B cell (primary cell): ENCODE measurements at regions of chr19 and their contacts with region 1.

Region 1: GRCh38 chr19:1756705-1757465 is 3.6 kb downstream of the ONECUT3 start:
- DNase-seq: peak; percentile 49
- ATAC-seq: no peak
- H3K4me3 ChIP-seq: no peak overlapping the region
- H3K4me3 Mint-ChIP-seq: peak overlapping the region; percentile 55
- H3K27ac ChIP-seq: no peak overlapping the region
- H3K27ac Mint-ChIP-seq: peak overlapping the region; percentile 67
- H3K4me1 ChIP-seq: peaks cover 48 to 53% of the 10 kb centered on the region in 2 donors
- H3K4me1 Mint-ChIP-seq: peaks cover 19% of the 10 kb centered on the region
- H3K27me3 ChIP-seq: peaks cover 0 to 83% (median 53%) of the 10 kb centered on the region in 4 experiments
- H3K27me3 Mint-ChIP-seq: peaks cover 29% of the 10 kb centered on the region
- CTCF ChIP-seq: no peak

Region 2: GRCh38 chr19:1611353-1611752 is 145.5 kb before region 1 on chr19:
- CTCF ChIA-PET with region 1: no interaction called
- POLR2A ChIA-PET with region 1: interaction called, 13 read pairs
- intact Hi-C with region 1: no loop called
- DNase-seq: no peak
- ATAC-seq: no peak
- H3K4me3 ChIP-seq: no peak overlapping the region
- H3K4me3 Mint-ChIP-seq: no peak overlapping the region
- H3K27ac ChIP-seq: no peak overlapping the region
- H3K27ac Mint-ChIP-seq: no peak overlapping the region
- H3K4me1 ChIP-seq: peaks cover 17 to 30% of the 10 kb centered on the region in 2 donors
- H3K4me1 Mint-ChIP-seq: peaks cover 28% of the 10 kb centered on the region
- H3K27me3 ChIP-seq: no peaks in the 10 kb centered on the region
- H3K27me3 Mint-ChIP-seq: no peaks in the 10 kb centered on the region
- CTCF ChIP-seq: no peak